ENCODE measurements at regions of chr11 and their contacts with region 1.

Region 1: GRCh38 chr11:111982019-111982464 is 43.2 kb upstream of the DLAT start:
- DNase-seq: peak; percentile 70
- ATAC-seq: peak; percentile 77
- H3K4me3 Mint-ChIP-seq: no peak overlapping the region
- H3K27ac Mint-ChIP-seq: no peak overlapping the region
- H3K4me1 Mint-ChIP-seq: peaks cover 8% of the 10 kb centered on the region
- H3K27me3 Mint-ChIP-seq: peaks cover 7% of the 10 kb centered on the region

Region 2: DNA sequence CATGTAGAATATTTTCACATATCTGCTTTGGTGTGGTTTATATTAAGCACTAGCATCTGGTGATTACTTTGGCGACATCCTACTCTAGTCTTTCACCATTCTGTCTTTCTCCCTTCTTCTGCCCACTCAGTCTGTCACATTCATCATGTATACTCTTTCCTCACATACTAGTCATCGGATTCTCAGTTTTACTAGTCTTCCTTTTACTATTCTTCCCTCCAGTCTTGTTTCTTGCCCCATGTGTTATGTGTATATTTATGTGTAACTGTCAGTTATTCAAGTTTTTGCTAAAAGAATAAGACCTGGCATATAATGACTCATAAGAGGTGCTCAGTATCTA is 49.5 kb before region 1 on chr11:
- CTCF ChIA-PET with region 1: interaction called, 68 read pairs
- DNase-seq: no peak
- ATAC-seq: no peak
- H3K4me3 Mint-ChIP-seq: peak overlapping the region; percentile 54
- H3K27ac Mint-ChIP-seq: peak overlapping the region; percentile 64
- H3K4me1 Mint-ChIP-seq: peaks cover 32% of the 10 kb centered on the region
- H3K27me3 Mint-ChIP-seq: no peaks in the 10 kb centered on the region

Region 3: DNA sequence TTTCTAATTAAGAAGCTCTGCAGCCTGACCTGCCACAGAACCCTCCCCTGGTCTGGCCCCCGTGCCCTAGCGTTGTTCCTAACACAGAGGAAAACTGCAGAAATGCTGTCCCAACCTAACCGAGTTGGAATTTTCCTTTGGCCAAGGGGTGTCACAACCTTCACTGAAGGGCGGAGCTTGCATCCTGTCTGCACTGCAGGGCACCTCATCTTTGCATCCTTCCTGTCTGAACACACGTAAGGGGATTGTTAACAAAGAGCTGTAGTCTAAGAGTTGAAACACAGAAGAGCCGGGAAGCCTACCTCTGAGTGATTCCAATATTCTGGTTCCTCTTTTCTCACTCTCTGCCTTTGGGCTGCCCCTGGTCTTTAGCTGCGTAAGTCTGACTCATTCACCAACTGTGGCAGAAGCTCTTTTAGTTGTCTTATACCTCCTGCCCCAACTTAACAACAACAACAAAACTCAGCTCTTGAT is 43.3 kb before region 1 on chr11:
- CTCF ChIA-PET with region 1: interaction called, 68 read pairs
- DNase-seq: peak; percentile 66
- ATAC-seq: peak; percentile 61
- H3K4me3 Mint-ChIP-seq: peak overlapping the region; percentile 84
- H3K27ac Mint-ChIP-seq: peak overlapping the region; percentile 80
- H3K4me1 Mint-ChIP-seq: peaks cover 38% of the 10 kb centered on the region
- H3K27me3 Mint-ChIP-seq: no peaks in the 10 kb centered on the region

Region 4: GRCh38 chr11:111992206-111992855 is 10.3 kb after region 1 on chr11:
- CTCF ChIA-PET with region 1: interaction called, 13 read pairs
- DNase-seq: no peak
- ATAC-seq: no peak
- H3K4me3 Mint-ChIP-seq: no peak overlapping the region
- H3K27ac Mint-ChIP-seq: no peak overlapping the region
- H3K4me1 Mint-ChIP-seq: no peaks in the 10 kb centered on the region
- H3K27me3 Mint-ChIP-seq: no peaks in the 10 kb centered on the region

Measured in activated CD8-positive, alpha-beta memory T cell treated with anti-CD3 and anti-CD28 coated beads, Interleukin-2, amount 10 ng/mL, durations not matched to agents 7 days and 5 days (primary cell).